ENCODE measurements at regions of chr14 and their contacts with region 1.

Region 1: GRCh38 chr14:21486640-21487087 is 9.7 kb downstream of the TOX4 start:
- DNase-seq: no peak
- ATAC-seq: no peak
- H3K4me3 Mint-ChIP-seq: no peak overlapping the region
- H3K27ac Mint-ChIP-seq: no peak overlapping the region
- H3K4me1 Mint-ChIP-seq: peaks cover 5% of the 10 kb centered on the region
- H3K27me3 Mint-ChIP-seq: no peaks in the 10 kb centered on the region
- CTCF ChIP-seq: no peak

Region 2: GRCh38 chr14:21498553-21499526 is 12.2 kb after region 1 on chr14:
- CTCF ChIA-PET with region 1: interaction called, 12 read pairs
- POLR2A ChIA-PET with region 1: interaction called, 4 read pairs
- intact Hi-C with region 1: no loop called
- DNase-seq: no peak
- ATAC-seq: peak; percentile 70
- H3K4me3 Mint-ChIP-seq: no peak overlapping the region
- H3K27ac Mint-ChIP-seq: no peak overlapping the region
- H3K4me1 Mint-ChIP-seq: no peaks in the 10 kb centered on the region
- H3K27me3 Mint-ChIP-seq: no peaks in the 10 kb centered on the region
- CTCF ChIP-seq: no peak